ENCODE measurements at regions of chr6 and their contacts with region 1.

Region 1: GRCh38 chr6:46090115-46091079 is 39.4 kb upstream of the ENPP4 start:
- DNase-seq: peak; percentile 10 to 54 (median 39)
- ATAC-seq: peak; percentile 76
- H3K4me3 ChIP-seq: no peak overlapping the region
- H3K4me3 Mint-ChIP-seq: no peak overlapping the region
- H3K27ac ChIP-seq: no peak overlapping the region
- H3K27ac Mint-ChIP-seq: no peak overlapping the region
- H3K4me1 ChIP-seq: no peaks in the 10 kb centered on the region
- H3K4me1 Mint-ChIP-seq: no peaks in the 10 kb centered on the region
- H3K27me3 ChIP-seq: no peaks in the 10 kb centered on the region
- H3K27me3 Mint-ChIP-seq: peaks cover 26 to 44% (median 38%) of the 10 kb centered on the region in 5 donors

Region 2: DNA sequence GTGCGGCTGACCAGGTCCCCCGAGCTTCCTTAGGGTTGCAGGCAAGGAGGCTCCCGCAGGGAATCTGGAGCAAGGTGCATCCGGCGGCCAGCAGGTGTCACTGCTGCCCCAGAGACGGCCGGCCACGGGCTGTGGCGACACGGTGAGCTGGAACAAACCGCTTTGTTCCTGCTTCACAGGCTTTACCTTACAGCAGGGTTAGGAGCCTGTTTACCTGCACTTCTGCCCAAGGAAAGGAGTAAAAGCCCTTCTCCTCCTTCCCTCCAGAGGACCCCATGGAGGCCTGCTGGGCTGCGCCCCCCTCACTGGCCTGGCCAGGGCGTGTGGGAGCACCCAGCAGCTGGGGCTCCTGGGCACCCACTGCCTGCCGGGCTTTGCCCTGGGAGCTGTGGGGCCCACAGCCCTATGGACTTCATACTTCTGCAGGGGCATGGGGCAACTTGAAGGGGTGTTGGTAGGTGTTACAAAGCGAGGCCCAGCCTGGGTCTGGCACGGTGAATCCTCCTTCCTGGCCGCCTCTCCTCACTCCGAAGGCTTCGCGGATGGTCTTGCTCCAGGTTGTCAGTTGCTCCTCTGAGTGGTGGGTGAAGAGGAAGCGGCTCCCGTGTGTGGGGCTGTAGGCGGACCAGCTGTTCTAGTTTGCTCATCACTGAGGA is 1614.5 kb before region 1 on chr6:
- CTCF ChIA-PET with region 1: interaction called, 3 read pairs
- POLR2A ChIA-PET with region 1: no interaction called
- intact Hi-C with region 1: loop called in 1 of 2 experiments (anchors 1 kb)
- DNase-seq: peak; percentile 38 to 78 (median 64)
- ATAC-seq: peak; percentile 82
- H3K4me3 ChIP-seq: no peak overlapping the region
- H3K4me3 Mint-ChIP-seq: no peak overlapping the region
- H3K27ac ChIP-seq: no peak overlapping the region
- H3K27ac Mint-ChIP-seq: no peak overlapping the region
- H3K4me1 ChIP-seq: peaks cover 0 to 9% of the 10 kb centered on the region in 2 donors
- H3K4me1 Mint-ChIP-seq: peaks cover 0 to 2% (median 0%) of the 10 kb centered on the region in 7 donors
- H3K27me3 ChIP-seq: no peaks in the 10 kb centered on the region
- H3K27me3 Mint-ChIP-seq: peaks cover 0 to 8% (median 0%) of the 10 kb centered on the region in 5 donors

Region 3: GRCh38 chr6:46129629-46130511 is 39.5 kb after region 1 on chr6 and contains the start of gene ENPP4:
- CTCF ChIA-PET with region 1: interaction called, 7 read pairs
- POLR2A ChIA-PET with region 1: no interaction called
- intact Hi-C with region 1: loop called in 1 of 2 experiments (anchors 1 kb)
- DNase-seq: peak; percentile 78 to 98 (median 91)
- ATAC-seq: peak; percentile 100
- H3K4me3 ChIP-seq: peak within 1 kb of the TSS; percentile 98
- H3K4me3 Mint-ChIP-seq: peak within 1 kb of the TSS; percentile 94 to 99 (median 98)
- H3K27ac ChIP-seq: peak within 1 kb of the TSS; percentile 73
- H3K27ac Mint-ChIP-seq: peak within 1 kb of the TSS; percentile 86 to 97 (median 92)
- H3K4me1 ChIP-seq: peaks cover 15 to 18% of the 10 kb centered on the region in 2 donors
- H3K4me1 Mint-ChIP-seq: peaks cover 19 to 59% (median 46%) of the 10 kb centered on the region in 7 donors
- H3K27me3 ChIP-seq: no peaks in the 10 kb centered on the region
- H3K27me3 Mint-ChIP-seq: peaks cover 0 to 4% (median 0%) of the 10 kb centered on the region in 5 donors
- total RNA-seq, gene ENPP4: 3.8 to 9.8 (median 8.2) TPM

Region 4: DNA sequence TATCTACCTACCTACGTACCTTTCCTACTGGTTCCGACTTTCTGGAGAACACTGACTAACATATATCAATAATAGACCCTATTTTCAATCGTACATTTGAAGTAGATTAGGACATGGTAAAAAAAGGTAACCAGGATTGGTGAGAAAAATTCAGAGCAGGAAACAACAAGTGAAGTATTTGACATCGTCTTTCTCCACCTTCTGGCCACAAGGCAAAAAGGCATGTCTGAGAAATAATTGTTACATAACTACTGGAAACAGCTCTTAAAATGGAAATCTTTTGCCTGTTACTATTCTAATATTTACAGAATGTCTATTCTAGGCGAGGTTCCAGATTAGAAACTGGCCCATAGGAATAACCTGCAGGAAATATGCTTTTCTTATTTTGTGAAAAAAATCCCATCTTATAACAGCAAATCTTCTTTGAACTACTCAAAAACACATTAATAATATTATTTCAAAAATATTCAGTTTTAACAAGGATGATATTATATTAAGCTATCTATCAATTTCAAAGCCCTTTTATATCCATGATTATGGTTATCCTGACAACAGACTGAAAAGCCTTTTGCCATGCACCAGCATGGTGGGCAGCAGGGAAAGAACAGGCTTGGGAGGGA is 320.0 kb after region 1 on chr6:
- CTCF ChIA-PET with region 1: interaction called, 28 read pairs
- POLR2A ChIA-PET with region 1: no interaction called
- intact Hi-C with region 1: loop called (anchors 1 kb)
- DNase-seq: peak in 6 of 9 donors; percentile 20 to 61 (median 40)
- ATAC-seq: no peak
- H3K4me3 ChIP-seq: no peak overlapping the region
- H3K4me3 Mint-ChIP-seq: no peak overlapping the region
- H3K27ac ChIP-seq: no peak overlapping the region
- H3K27ac Mint-ChIP-seq: no peak overlapping the region
- H3K4me1 ChIP-seq: no peaks in the 10 kb centered on the region
- H3K4me1 Mint-ChIP-seq: no peaks in the 10 kb centered on the region
- H3K27me3 ChIP-seq: no peaks in the 10 kb centered on the region
- H3K27me3 Mint-ChIP-seq: peaks cover 0 to 4% (median 4%) of the 10 kb centered on the region in 5 donors

Region 5: DNA sequence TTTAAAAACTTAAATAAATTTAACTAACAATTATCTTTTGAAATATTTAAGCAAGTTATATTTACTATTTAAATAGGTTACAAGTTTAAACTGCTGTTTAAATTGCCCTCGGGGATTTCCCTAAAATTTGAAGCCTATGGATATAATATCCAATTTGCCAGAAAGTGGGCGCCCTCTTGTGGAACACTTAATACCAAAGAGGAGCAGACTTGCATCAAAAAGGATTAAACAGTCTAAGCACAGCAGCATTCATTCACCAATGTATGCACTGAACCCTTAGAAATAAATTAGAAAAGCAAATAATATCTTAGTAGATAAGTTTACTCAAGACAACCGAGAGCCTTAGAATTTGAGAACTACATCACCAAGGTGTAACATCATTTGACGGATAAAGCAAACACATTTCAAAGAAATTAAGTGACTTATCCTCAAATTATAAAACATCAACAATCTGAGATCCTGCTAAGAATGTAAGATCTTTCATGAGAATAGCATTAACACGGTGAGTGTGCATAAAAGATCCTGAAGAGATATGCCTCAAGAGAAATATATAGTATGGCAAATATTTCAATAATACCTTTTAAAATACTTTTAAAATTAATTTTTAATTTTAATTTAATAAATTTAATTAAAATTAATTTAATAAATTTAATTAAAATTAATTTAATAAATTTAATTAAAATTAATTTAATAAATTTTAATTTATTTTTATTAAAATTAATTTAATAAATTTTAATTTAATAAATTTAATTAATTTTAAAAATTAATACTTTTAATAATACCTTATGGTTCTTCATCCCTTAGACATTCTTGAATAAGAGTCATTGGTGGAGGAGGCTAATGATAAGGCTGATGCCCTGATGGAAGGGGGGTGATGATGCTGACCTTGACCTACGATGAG is 691.3 kb after region 1 on chr6:
- CTCF ChIA-PET with region 1: no interaction called
- POLR2A ChIA-PET with region 1: no interaction called
- intact Hi-C with region 1: loop called (anchors 1 to 2 kb)
- DNase-seq: no peak
- ATAC-seq: peak; percentile 53
- H3K4me3 ChIP-seq: no peak overlapping the region
- H3K4me3 Mint-ChIP-seq: no peak overlapping the region
- H3K27ac ChIP-seq: no peak overlapping the region
- H3K27ac Mint-ChIP-seq: no peak overlapping the region
- H3K4me1 ChIP-seq: no peaks in the 10 kb centered on the region
- H3K4me1 Mint-ChIP-seq: no peaks in the 10 kb centered on the region
- H3K27me3 ChIP-seq: no peaks in the 10 kb centered on the region
- H3K27me3 Mint-ChIP-seq: peaks cover 0 to 32% (median 9%) of the 10 kb centered on the region in 5 donors